Pancreas (tissue), 10 donors: ENCODE measurements at regions of chr20 and their contacts with region 1.

Region 1: GRCh38 chr20:20360464-20360863 is 7.4 kb upstream of the INSM1 start:
- DNase-seq: peak in 5 of 6 donors; percentile 24 to 59 (median 43)
- ATAC-seq: peak; percentile 83 to 97 (median 90)
- H3K4me3 ChIP-seq: no peak overlapping the region
- H3K27ac ChIP-seq: no peak overlapping the region
- H3K4me1 ChIP-seq: peaks cover 0 to 6% (median 0%) of the 10 kb centered on the region in 3 donors
- H3K27me3 ChIP-seq: peaks cover 0 to 17% (median 4%) of the 10 kb centered on the region in 4 donors
- CTCF ChIP-seq: peak; percentile 52 to 69 (median 58)

Region 2: GRCh38 chr20:18524646-18525045 is 1835.8 kb before region 1 on chr20:
- intact Hi-C with region 1: no loop called
- DNase-seq: no peak
- ATAC-seq: no peak
- H3K4me3 ChIP-seq: no peak overlapping the region
- H3K27ac ChIP-seq: no peak overlapping the region
- H3K4me1 ChIP-seq: no peaks in the 10 kb centered on the region
- H3K27me3 ChIP-seq: no peaks in the 10 kb centered on the region
- CTCF ChIP-seq: no peak

Region 3: GRCh38 chr20:20568604-20569205 is 208.2 kb after region 1 on chr20:
- intact Hi-C with region 1: loop called in 1 of 3 experiments (anchors 10 kb)
- DNase-seq: no peak
- ATAC-seq: peak; percentile 71 to 85 (median 80)
- H3K4me3 ChIP-seq: no peak overlapping the region
- H3K27ac ChIP-seq: no peak overlapping the region
- H3K4me1 ChIP-seq: peaks cover 0 to 16% (median 16%) of the 10 kb centered on the region in 3 donors
- H3K27me3 ChIP-seq: no peaks in the 10 kb centered on the region
- CTCF ChIP-seq: peak in 2 of 4 donors; percentile 37 to 45